ENCODE measurements at regions of chr19 and their contacts with region 1.

Region 1: GRCh38 chr19:17135001-17135853 is 59.6 kb downstream of the MYO9B start:
- DNase-seq: peak; percentile 75 to 77
- ATAC-seq: peak; percentile 66

Region 2: DNA sequence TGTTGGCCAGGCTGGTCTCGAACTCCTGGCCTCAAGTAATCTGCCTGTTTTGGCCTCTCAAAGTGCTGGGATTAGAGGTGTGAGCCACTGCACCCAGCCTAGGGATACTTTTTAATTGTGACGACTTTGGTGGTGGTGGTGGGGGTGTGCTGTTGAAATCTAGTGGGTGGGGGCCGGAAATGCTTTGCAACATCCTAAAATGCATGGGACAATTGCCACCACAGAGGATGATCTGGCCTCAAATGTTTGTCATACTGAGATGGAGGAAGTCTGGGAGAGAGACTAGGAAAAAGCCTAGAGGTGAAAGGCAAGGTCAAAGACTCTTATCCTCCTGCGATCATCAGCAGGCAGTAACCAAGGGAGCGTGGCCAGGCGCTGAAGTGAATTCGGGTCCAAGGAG is 414.2 kb before region 1 on chr19:
- intact Hi-C with region 1: no loop called
- DNase-seq: no peak
- ATAC-seq: no peak

Region 3: GRCh38 chr19:17075035-17075863 is 60.0 kb before region 1 on chr19 and contains the starts of genes HAUS8 and MYO9B:
- intact Hi-C with region 1: loop called in 1 of 2 experiments (anchors 10 kb)
- DNase-seq: peak; percentile 99
- ATAC-seq: peak; percentile 94
- total RNA-seq, gene HAUS8: 10.7 to 14.1 TPM
- total RNA-seq, gene MYO9B: 69.9 to 82.2 TPM